CD8-positive, alpha-beta T cell (primary cell): ENCODE measurements at regions of chr12 and their contacts with region 1.

Region 1: GRCh38 chr12:93219947-93220346 is 157.8 kb upstream of the NUDT4 start:
- DNase-seq: no peak
- ATAC-seq: no peak
- H3K4me3 ChIP-seq: no peak overlapping the region
- H3K4me3 Mint-ChIP-seq: no peak overlapping the region
- H3K27ac ChIP-seq: no peak overlapping the region
- H3K27ac Mint-ChIP-seq: no peak overlapping the region
- H3K4me1 ChIP-seq: no peaks in the 10 kb centered on the region
- H3K4me1 Mint-ChIP-seq: no peaks in the 10 kb centered on the region
- H3K27me3 ChIP-seq: no peaks in the 10 kb centered on the region
- H3K27me3 Mint-ChIP-seq: no peaks in the 10 kb centered on the region
- CTCF ChIP-seq: no peak

Region 2: GRCh38 chr12:93261505-93262094 is 41.7 kb after region 1 on chr12:
- CTCF ChIA-PET with region 1: no interaction called
- POLR2A ChIA-PET with region 1: no interaction called
- intact Hi-C with region 1: loop called in 1 of 2 experiments (anchors 10 kb)
- DNase-seq: no peak
- ATAC-seq: no peak
- H3K4me3 ChIP-seq: no peak overlapping the region
- H3K4me3 Mint-ChIP-seq: no peak overlapping the region
- H3K27ac ChIP-seq: no peak overlapping the region
- H3K27ac Mint-ChIP-seq: no peak overlapping the region
- H3K4me1 ChIP-seq: no peaks in the 10 kb centered on the region
- H3K4me1 Mint-ChIP-seq: no peaks in the 10 kb centered on the region
- H3K27me3 ChIP-seq: no peaks in the 10 kb centered on the region
- H3K27me3 Mint-ChIP-seq: no peaks in the 10 kb centered on the region
- CTCF ChIP-seq: no peak